ENCODE measurements at regions of chr13 and their contacts with region 1.

Region 1: DNA sequence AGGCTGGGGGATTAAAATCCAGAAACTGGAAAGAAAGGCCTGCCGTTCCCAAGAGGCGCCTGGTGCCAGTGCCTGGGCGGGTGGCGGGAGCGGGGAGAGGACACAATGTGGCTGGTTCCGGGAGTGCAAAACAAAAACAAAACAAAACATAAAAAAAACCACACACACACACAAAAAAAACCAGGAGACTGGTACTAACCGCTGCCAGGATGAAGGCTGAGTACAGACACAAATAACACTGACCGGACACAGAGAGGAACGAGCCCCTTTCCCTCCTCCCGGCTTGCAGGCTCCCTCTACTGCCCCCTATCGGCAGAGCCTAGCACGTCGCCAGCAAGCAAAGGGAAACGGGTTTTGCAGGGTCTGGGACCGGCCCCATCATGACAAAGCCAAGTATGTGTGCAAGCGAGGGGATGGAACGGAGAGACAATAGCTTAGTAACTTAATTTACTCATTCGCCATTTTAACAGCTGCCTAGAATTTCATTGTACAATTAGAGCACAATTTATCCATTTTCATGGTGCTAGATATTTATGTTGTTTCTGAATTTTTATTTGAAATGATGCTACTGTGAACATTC is 17.9 kb upstream of the ZDHHC20 start:
- DNase-seq: peak; percentile 83
- H3K4me3 Mint-ChIP-seq: peak overlapping the region; percentile 76
- H3K27ac Mint-ChIP-seq: peak overlapping the region; percentile 60
- H3K4me1 Mint-ChIP-seq: peaks cover 14% of the 10 kb centered on the region
- H3K27me3 Mint-ChIP-seq: no peaks in the 10 kb centered on the region

Region 2: DNA sequence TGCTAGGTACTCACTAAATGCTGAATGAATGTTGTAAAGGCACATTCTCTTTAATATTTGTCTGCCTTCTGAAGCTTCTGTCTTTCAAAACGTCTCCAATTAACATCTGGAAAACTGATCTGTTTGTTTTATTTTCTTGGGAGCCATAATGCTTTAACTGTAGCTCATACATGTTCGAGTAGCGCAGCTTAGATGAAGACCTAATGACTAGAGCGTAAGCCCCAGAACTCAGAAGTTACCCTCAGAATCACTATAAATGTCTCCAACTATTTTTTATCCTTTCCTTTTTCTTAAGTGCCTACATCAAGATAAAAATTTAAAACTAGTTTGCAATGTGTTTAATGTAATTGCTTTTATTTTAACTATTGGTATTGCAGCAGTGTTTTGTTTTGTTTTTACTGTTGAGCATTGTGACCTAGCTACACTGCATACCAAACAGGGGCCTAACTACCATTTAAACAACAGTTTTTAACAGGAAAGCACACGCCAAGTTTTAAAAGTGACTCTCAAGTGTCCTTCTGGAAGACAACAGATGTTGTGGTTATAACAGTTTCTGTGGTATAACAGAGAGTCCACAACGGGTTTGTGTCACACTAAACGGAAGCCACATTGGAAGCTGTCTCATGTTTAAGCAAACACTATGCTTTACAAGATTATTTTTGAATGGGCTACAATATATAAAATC is 258.5 kb before region 1 on chr13:
- CTCF ChIA-PET with region 1: interaction called, 11 read pairs
- POLR2A ChIA-PET with region 1: no interaction called
- DNase-seq: peak; percentile 49
- H3K4me3 Mint-ChIP-seq: peak overlapping the region; percentile 19
- H3K27ac Mint-ChIP-seq: peak overlapping the region; percentile 67
- H3K4me1 Mint-ChIP-seq: peaks cover 20% of the 10 kb centered on the region
- H3K27me3 Mint-ChIP-seq: peaks cover 51% of the 10 kb centered on the region

Region 3: DNA sequence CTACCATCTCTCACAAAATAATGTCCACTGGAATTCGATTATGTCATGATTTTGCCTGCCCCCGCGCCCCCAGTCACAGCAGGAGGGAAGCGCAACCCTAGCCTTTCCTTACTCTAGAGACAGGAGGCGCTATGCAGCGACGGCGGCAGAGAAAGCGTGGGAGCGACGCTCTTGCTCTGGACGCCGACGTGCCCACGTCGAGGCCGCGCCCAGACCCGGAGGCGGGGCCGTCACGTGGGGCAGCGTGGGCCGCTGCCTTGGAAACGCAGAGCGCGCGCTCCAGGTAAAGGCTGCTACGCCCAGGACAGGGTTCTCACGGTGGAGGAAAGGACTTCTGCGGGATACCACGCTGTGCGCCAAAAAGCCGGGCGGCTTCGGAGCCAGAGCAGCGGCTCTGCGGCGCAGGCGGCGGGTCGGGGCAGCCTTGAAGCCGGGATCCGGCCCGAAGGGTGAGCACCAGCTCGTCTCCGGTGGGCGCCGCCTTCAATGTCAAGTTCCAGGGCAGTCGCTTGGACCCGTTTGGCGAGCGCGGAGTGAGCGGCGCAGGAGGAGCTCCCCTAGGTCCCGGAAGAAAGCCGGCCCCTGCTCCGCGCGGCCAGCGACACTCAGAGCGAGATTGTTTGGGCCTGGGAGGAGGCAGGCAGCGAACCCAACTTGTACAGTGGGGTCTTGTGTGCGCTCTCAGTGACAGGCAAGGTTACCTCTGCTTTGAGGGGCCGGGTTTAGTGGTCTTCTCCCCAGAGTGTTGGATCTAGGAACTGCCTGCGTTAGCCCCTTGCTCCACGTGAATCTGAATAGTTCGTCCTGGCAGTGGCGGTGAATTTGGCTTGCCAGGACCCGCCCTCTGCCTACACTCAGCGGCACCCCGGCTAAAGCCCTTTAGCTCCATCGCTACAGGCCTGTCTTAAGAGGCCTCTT is 178.8 kb before region 1 on chr13:
- CTCF ChIA-PET with region 1: interaction called, 146 read pairs
- POLR2A ChIA-PET with region 1: interaction called, 13 read pairs
- DNase-seq: peak; percentile 87
- H3K4me3 Mint-ChIP-seq: peak overlapping the region; percentile 84
- H3K27ac Mint-ChIP-seq: peak overlapping the region; percentile 29
- H3K4me1 Mint-ChIP-seq: peaks cover 28% of the 10 kb centered on the region
- H3K27me3 Mint-ChIP-seq: no peaks in the 10 kb centered on the region

Region 4: DNA sequence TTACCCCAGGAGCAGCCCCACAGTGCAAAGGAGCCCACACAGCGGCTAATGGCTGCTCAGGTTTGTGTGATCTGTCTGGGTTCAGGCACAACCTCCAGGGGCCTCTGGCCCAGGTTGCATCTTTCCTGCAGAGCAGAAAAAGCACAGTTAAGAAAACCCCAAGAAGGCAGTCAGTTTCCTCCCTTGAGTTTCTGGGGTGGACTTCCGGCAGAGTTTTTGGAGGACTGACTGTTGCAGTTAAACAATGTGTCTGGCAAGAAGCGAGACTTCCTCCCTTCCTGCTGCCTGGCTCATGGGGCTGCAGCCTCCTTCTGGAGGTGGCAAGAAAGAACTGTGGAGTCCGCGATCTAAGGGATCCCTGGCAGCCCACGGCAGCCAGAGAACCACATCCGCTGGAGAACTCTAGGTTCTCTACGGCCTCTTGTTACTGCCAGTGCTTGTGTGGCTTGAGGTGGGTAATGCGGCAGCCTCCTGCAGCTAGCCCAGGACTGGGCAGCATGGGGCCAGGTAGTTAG is 132.3 kb before region 1 on chr13:
- CTCF ChIA-PET with region 1: interaction called, 30 read pairs
- POLR2A ChIA-PET with region 1: no interaction called
- DNase-seq: peak; percentile 64
- H3K4me3 Mint-ChIP-seq: peak overlapping the region; percentile 67
- H3K27ac Mint-ChIP-seq: peak overlapping the region; percentile 86
- H3K4me1 Mint-ChIP-seq: peaks cover 31% of the 10 kb centered on the region
- H3K27me3 Mint-ChIP-seq: no peaks in the 10 kb centered on the region

Region 5: DNA sequence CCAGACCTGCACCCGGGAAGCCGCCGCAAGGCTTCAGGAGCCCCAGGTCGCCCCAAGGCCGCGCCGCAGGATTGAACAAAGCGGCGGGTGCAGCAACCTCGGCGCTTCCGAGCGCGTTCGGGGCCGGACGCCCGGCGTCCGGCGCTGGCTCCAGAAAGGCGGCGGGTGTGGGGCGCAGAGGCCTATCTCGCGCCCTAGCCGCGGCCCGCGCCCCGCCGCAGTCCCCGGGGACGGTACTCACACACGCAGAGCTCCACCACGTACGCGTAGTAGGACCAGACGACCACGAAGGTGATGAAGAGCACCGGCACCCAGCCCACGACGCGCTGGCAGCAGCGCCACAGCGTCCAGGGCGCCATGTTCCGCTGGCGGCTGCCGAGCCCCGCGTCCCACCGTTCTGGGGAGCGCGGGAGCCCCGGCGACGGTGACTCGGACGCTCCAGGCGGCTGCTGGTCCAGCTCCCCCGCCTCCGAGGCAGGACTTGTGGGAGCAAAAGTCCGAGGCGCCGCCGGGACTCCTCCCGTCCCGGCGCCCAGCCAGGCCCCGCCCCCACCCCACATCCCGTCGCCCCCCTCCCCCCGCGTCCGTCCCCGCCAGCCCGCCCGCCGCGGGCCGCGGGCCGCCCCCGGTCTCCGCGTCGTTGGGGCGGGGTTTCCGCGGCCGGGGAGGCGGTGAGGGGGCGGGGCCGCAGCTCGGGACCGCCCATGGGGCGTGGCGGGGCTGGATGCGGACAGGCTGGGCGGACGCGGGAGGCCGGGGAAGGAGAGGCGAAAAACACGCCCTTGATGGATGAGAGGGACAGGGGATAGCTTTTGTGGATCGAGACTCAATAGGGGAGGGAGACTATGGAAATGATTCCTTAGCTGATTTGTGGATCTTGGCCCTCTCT is 17.9 kb before region 1 on chr13 and contains the start of gene ZDHHC20:
- CTCF ChIA-PET with region 1: interaction called, 11 read pairs
- POLR2A ChIA-PET with region 1: interaction called, 6 read pairs
- DNase-seq: peak; percentile 91
- H3K4me3 Mint-ChIP-seq: peak within 1 kb of the TSS; percentile 85
- H3K27ac Mint-ChIP-seq: peak within 1 kb of the TSS; percentile 91
- H3K4me1 Mint-ChIP-seq: peaks cover 34% of the 10 kb centered on the region
- H3K27me3 Mint-ChIP-seq: no peaks in the 10 kb centered on the region
- total RNA-seq, gene ZDHHC20: 92.0 to 103 TPM

Region 6: DNA sequence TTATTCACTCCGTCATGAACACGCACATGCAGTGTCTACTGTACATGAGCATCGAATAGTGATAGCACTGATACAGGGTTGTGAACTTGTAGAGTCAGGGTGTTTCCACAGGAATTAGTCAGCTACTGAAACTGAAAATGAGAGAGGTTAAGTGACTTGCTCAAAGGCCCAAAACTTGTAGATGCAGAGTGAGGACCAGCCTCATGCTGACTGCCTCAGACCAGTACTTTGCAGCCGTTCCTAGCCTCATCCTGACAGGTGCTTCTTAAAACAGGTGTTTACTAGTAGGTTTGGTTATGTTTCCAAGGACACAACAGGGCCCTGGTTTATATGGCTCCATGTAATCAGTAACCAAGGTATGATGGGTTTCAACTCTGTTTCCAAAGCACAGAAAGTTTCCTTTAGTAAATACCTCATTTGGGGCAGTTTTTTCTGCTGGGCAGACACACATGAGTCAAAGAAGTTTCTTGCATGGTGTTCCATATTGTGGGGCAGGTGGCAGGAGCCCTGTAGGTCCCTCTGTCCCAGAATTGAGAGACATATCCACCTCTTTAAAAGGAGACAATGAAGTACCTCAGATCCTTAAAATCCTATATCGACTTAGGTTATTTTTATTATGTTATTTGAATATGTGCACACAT is 209.9 kb after region 1 on chr13:
- CTCF ChIA-PET with region 1: no interaction called
- POLR2A ChIA-PET with region 1: no interaction called
- DNase-seq: peak; percentile 33
- H3K4me3 Mint-ChIP-seq: no peak overlapping the region
- H3K27ac Mint-ChIP-seq: no peak overlapping the region
- H3K4me1 Mint-ChIP-seq: peaks cover 17% of the 10 kb centered on the region
- H3K27me3 Mint-ChIP-seq: peaks cover 9% of the 10 kb centered on the region

Measured in activated CD4-positive, alpha-beta memory T cell treated with anti-CD3 and anti-CD28 coated beads, Interleukin-2, amount 10 ng/mL, durations not matched to agents 7 days and 5 days (primary cell).